Caco-2 (cell line): ENCODE measurements at regions of chr11 and their contacts with region 1.

Region 1: DNA sequence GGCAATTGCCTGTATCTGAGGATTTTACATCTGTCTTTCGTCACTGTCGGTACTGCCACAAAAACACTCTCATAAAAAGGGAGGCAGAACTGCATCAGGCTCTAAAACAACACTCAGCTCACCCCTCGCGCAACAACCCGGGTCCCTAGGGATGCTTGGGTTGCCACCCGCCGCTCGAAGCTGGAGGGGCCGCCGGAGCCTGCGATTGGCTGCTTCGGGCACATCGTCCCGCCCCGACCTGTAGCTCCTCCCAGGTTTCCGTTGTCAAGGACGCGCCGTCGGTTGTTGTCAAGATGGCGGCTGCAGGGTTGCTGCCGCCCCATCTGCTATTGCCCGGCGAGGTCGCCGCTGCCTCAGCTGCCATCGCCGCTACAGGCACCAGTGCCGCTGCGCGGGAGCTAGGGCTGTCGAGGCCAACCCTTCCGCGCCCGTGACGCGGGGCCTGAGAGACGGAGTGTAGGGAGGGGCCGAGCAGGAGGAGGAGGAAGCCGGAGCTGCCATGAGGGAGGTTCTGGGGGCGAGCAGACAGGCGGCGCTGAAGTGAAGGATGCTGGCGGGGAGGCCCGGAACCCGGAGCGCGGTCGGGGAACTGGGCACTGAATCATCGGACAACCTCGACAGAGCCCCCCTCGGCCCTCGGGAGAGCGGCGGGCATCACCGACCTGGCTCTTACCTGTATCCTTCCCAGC is at the start of gene CEP126:
- DNase-seq: peak; percentile 97 to 98
- H3K4me3 ChIP-seq: peak within 1 kb of the TSS; percentile 66
- H3K4me3 Mint-ChIP-seq: peak within 1 kb of the TSS; percentile 92
- H3K27ac Mint-ChIP-seq: peak within 1 kb of the TSS; percentile 94
- H3K4me1 ChIP-seq: peaks cover 31% of the 10 kb centered on the region
- H3K4me1 Mint-ChIP-seq: peaks cover 41% of the 10 kb centered on the region
- H3K27me3 ChIP-seq: no peaks in the 10 kb centered on the region
- H3K27me3 Mint-ChIP-seq: no peaks in the 10 kb centered on the region
- CTCF ChIP-seq: peak; percentile 27 to 94
- total RNA-seq, gene CEP126: 4.3 and 4.6 TPM in 2 replicates

Region 2: GRCh38 chr11:101860696-101861427 is 54.0 kb before region 1 on chr11:
- CTCF ChIA-PET with region 1: interaction called, 37 read pairs
- POLR2A ChIA-PET with region 1: no interaction called
- intact Hi-C with region 1: loop called (anchors 1 kb)
- DNase-seq: peak; percentile 73 to 79
- H3K4me3 ChIP-seq: no peak overlapping the region
- H3K4me3 Mint-ChIP-seq: no peak overlapping the region
- H3K27ac Mint-ChIP-seq: peak overlapping the region; percentile 71
- H3K4me1 ChIP-seq: peaks cover 28% of the 10 kb centered on the region
- H3K4me1 Mint-ChIP-seq: peaks cover 25% of the 10 kb centered on the region
- H3K27me3 ChIP-seq: no peaks in the 10 kb centered on the region
- H3K27me3 Mint-ChIP-seq: no peaks in the 10 kb centered on the region
- CTCF ChIP-seq: peak; percentile 89 to 95

Region 3: GRCh38 chr11:101931692-101932091 is 16.8 kb after region 1 on chr11:
- CTCF ChIA-PET with region 1: interaction called, 12 read pairs
- POLR2A ChIA-PET with region 1: no interaction called
- intact Hi-C with region 1: loop called (anchors 2 kb)
- DNase-seq: no peak
- H3K4me3 ChIP-seq: no peak overlapping the region
- H3K4me3 Mint-ChIP-seq: no peak overlapping the region
- H3K27ac Mint-ChIP-seq: no peak overlapping the region
- H3K4me1 ChIP-seq: no peaks in the 10 kb centered on the region
- H3K4me1 Mint-ChIP-seq: no peaks in the 10 kb centered on the region
- H3K27me3 ChIP-seq: no peaks in the 10 kb centered on the region
- H3K27me3 Mint-ChIP-seq: no peaks in the 10 kb centered on the region
- CTCF ChIP-seq: no peak

Region 4: GRCh38 chr11:101974255-101974654 is 59.4 kb after region 1 on chr11:
- CTCF ChIA-PET with region 1: interaction called, 49 read pairs
- POLR2A ChIA-PET with region 1: interaction called, 12 read pairs
- intact Hi-C with region 1: loop called (anchors 1 kb)
- DNase-seq: peak in 1 of 2 experiments; percentile 65
- H3K4me3 ChIP-seq: no peak overlapping the region
- H3K4me3 Mint-ChIP-seq: peak overlapping the region; percentile 45
- H3K27ac Mint-ChIP-seq: peak overlapping the region; percentile 43
- H3K4me1 ChIP-seq: peaks cover 22% of the 10 kb centered on the region
- H3K4me1 Mint-ChIP-seq: peaks cover 14% of the 10 kb centered on the region
- H3K27me3 ChIP-seq: no peaks in the 10 kb centered on the region
- H3K27me3 Mint-ChIP-seq: no peaks in the 10 kb centered on the region
- CTCF ChIP-seq: peak; percentile 39 to 72

Region 5: DNA sequence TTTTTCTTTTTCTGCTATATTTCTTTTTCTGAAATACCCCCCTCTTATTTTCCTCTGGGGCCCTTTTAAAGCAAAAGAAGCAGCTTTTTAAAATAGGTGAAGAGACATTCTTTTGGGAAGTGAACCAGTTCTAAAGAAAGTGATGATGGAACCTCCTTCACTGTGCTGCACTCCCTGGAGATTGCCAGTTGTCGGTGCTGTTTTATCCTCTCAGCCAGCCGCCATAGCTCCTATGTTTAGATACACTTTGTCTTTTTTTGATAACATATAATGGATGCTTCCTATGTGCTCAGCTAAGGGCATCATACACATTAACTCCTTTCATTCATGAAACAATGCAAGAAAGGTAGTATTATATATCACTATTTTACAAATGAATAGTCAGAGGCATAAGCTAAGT is 146.4 kb after region 1 on chr11:
- CTCF ChIA-PET with region 1: no interaction called
- POLR2A ChIA-PET with region 1: no interaction called
- intact Hi-C with region 1: no loop called
- DNase-seq: peak in 1 of 2 experiments; percentile 26
- H3K4me3 ChIP-seq: no peak overlapping the region
- H3K4me3 Mint-ChIP-seq: no peak overlapping the region
- H3K27ac Mint-ChIP-seq: no peak overlapping the region
- H3K4me1 ChIP-seq: no peaks in the 10 kb centered on the region
- H3K4me1 Mint-ChIP-seq: peaks cover 6% of the 10 kb centered on the region
- H3K27me3 ChIP-seq: no peaks in the 10 kb centered on the region
- H3K27me3 Mint-ChIP-seq: no peaks in the 10 kb centered on the region
- CTCF ChIP-seq: peak; percentile 43

Region 6: GRCh38 chr11:102268329-102269193 is 353.7 kb after region 1 on chr11:
- CTCF ChIA-PET with region 1: interaction called, 4 read pairs
- POLR2A ChIA-PET with region 1: no interaction called
- intact Hi-C with region 1: loop called (anchors 2 kb)
- DNase-seq: peak; percentile 97 to 98
- H3K4me3 ChIP-seq: peak overlapping the region; percentile 67
- H3K4me3 Mint-ChIP-seq: peak overlapping the region; percentile 90
- H3K27ac Mint-ChIP-seq: peak overlapping the region; percentile 79
- H3K4me1 ChIP-seq: peaks cover 33% of the 10 kb centered on the region
- H3K4me1 Mint-ChIP-seq: peaks cover 33% of the 10 kb centered on the region
- H3K27me3 ChIP-seq: no peaks in the 10 kb centered on the region
- H3K27me3 Mint-ChIP-seq: no peaks in the 10 kb centered on the region
- CTCF ChIP-seq: peak; percentile 61 to 97

Region 7: DNA sequence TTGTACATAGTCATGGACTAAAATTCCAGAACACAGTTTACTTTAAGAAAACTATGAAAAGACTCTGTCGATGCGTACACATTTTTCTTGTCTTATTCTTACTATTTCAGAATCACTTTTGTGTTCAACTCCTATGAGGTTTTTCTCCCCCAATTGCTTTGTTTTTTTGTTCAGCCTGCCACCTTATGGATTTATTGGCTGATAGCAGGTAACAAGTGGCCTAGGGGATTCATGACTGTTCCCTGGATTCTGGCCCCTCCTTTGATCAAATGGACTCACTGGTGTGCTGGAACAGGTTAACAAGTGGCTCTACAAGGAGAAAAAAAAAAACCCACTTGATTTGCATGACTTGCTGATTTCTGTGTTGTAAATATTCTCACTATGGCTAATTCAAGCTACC is 699.6 kb after region 1 on chr11:
- CTCF ChIA-PET with region 1: interaction called, 4 read pairs
- POLR2A ChIA-PET with region 1: no interaction called
- intact Hi-C with region 1: loop called (anchors 1 kb)
- DNase-seq: peak in 1 of 2 experiments; percentile 30
- H3K4me3 ChIP-seq: no peak overlapping the region
- H3K4me3 Mint-ChIP-seq: no peak overlapping the region
- H3K27ac Mint-ChIP-seq: no peak overlapping the region
- H3K4me1 ChIP-seq: peaks cover 28% of the 10 kb centered on the region
- H3K4me1 Mint-ChIP-seq: peaks cover 35% of the 10 kb centered on the region
- H3K27me3 ChIP-seq: no peaks in the 10 kb centered on the region
- H3K27me3 Mint-ChIP-seq: no peaks in the 10 kb centered on the region
- CTCF ChIP-seq: peak in 1 of 2 experiments; percentile 46